WTC11 (cell line): ENCODE measurements at regions of chr19 and their contacts with region 1.

Region 1: DNA sequence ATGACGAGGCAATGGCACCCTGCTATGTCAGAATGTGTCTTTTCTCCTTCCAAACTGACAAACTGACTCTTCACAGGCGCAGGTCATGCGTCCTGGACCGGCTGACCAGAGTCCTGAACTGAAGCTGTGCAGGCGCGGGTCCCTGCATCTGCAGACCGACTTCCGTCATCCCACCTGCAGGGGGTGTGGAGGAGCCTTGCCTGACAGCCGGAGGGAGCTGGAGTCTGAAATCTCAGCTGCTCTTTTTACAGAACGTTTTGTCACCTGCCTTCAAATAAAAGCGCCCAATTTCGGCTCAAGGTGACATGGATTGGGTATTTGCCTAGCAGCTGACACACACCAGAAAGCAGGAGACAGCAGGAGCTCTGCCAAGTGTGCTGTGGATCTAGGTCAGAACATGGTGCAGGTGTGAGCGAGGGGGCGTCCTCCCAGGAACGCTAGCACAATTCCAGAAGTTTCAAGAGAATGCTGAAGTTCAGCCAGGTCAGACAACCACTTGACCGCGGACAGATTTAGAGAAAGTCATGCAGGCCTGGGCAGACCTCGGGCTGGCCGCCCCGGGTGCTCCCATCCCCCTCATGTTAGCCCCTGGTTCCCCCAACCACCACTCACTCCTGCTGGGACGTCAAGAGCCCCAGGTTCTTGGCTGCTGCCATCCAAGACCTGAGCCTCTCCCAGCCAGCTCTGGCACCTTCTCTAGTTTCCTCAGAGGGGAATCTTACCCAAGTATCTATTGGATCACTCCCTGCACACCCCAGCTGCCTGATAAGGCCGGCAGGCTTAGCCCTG is 32.8 kb downstream of the ELL start:
- DNase-seq: peak; percentile 73
- ATAC-seq: peak; percentile 73
- H3K4me3 Mint-ChIP-seq: no peak overlapping the region
- H3K27ac Mint-ChIP-seq: peak overlapping the region; percentile 65; the same call in 1 of the 2 replicates
- H3K4me1 Mint-ChIP-seq: peaks cover 32% of the 10 kb centered on the region
- H3K27me3 Mint-ChIP-seq: no peaks in the 10 kb centered on the region
- CTCF ChIP-seq: no peak

Region 2: GRCh38 chr19:18450931-18451845 is 37.8 kb before region 1 on chr19:
- CTCF ChIA-PET with region 1: interaction called, 10 read pairs
- POLR2A ChIA-PET with region 1: no interaction called
- DNase-seq: peak; percentile 95
- ATAC-seq: peak; percentile 83
- H3K4me3 Mint-ChIP-seq: no peak overlapping the region
- H3K27ac Mint-ChIP-seq: no peak overlapping the region; the same call in 1 of the 2 replicates
- H3K4me1 Mint-ChIP-seq: peaks cover 3% of the 10 kb centered on the region; the same call in 1 of the 2 replicates
- H3K27me3 Mint-ChIP-seq: no peaks in the 10 kb centered on the region
- CTCF ChIP-seq: peak; percentile 98

Region 3: GRCh38 chr19:18469069-18469846 is 19.8 kb before region 1 on chr19:
- CTCF ChIA-PET with region 1: interaction called, 24 read pairs
- POLR2A ChIA-PET with region 1: interaction called, 3 read pairs
- DNase-seq: peak; percentile 87
- ATAC-seq: peak; percentile 74
- H3K4me3 Mint-ChIP-seq: no peak overlapping the region
- H3K27ac Mint-ChIP-seq: no peak overlapping the region
- H3K4me1 Mint-ChIP-seq: peaks cover 9% of the 10 kb centered on the region
- H3K27me3 Mint-ChIP-seq: no peaks in the 10 kb centered on the region
- CTCF ChIP-seq: peak; percentile 88

Region 4: DNA sequence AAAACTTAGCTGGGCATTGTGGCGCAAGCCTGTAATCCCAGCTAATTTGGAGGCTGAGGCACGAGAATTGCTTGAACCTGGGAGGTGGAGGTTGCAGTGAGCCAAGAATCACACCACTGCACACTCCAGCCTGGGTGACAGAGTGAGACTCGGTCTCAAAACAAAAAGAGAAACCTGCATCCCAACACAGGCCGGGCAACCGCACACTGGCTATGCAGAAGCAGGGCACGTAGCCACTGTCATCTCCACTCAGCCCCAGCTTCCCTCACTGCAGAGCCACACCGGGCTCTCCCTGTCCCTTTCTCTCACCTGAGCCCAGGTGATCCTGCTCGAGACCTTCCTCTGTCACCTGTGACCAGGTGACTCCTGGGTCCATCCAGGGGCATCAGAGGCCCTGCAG is 21.2 kb after region 1 on chr19:
- CTCF ChIA-PET with region 1: interaction called, 12 read pairs
- POLR2A ChIA-PET with region 1: interaction called, 3 read pairs
- DNase-seq: no peak
- ATAC-seq: no peak
- H3K4me3 Mint-ChIP-seq: no peak overlapping the region
- H3K27ac Mint-ChIP-seq: peak overlapping the region; percentile 60; the same call in 1 of the 2 replicates
- H3K4me1 Mint-ChIP-seq: peaks cover 4% of the 10 kb centered on the region
- H3K27me3 Mint-ChIP-seq: no peaks in the 10 kb centered on the region
- CTCF ChIP-seq: no peak

Region 5: DNA sequence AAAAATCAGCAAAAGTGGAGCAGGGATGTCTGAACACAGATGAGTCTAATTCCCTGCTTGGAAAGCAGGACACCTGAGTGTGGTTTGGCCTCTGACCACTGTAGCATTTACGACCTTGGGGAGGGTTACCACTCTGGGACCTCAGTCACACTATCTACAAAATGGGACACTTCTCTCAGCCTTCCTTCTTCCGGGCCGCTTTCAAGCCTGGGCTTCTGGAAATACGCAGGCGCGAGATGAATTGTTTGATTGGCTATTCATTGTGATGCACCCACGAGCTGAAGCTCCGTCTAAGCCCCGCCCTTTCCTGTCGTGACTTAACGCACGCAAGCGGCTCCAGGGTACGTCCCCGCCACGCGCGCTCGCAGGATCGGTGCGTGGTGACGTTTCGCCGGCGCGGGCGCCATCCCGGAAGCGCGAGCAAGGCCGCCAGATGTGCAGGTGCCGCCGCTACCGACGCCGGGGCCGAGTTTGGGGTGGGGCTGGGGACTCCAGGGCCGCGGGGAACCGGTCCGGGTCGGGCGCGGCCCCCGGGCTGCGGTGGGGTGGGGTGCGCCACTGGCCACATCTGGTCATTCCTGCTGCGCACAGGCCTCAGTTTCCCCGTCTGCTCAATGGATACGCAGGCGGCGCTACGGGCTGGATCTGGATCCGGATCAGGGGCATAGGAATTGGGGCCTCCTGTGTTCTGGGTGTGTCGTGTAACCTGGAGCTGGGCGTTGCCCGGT is 68.6 kb after region 1 on chr19 and contains the start of gene KXD1:
- CTCF ChIA-PET with region 1: interaction called, 10 read pairs
- POLR2A ChIA-PET with region 1: interaction called, 3 read pairs
- DNase-seq: peak; percentile 79
- ATAC-seq: peak; percentile 91
- H3K4me3 Mint-ChIP-seq: peak within 1 kb of the TSS; percentile 87
- H3K27ac Mint-ChIP-seq: peak within 1 kb of the TSS; percentile 73
- H3K4me1 Mint-ChIP-seq: peaks cover 8% of the 10 kb centered on the region
- H3K27me3 Mint-ChIP-seq: no peaks in the 10 kb centered on the region
- CTCF ChIP-seq: no peak
- total RNA-seq, gene KXD1: 136 to 155 TPM (median 154 TPM) in 3 replicates

Region 6: DNA sequence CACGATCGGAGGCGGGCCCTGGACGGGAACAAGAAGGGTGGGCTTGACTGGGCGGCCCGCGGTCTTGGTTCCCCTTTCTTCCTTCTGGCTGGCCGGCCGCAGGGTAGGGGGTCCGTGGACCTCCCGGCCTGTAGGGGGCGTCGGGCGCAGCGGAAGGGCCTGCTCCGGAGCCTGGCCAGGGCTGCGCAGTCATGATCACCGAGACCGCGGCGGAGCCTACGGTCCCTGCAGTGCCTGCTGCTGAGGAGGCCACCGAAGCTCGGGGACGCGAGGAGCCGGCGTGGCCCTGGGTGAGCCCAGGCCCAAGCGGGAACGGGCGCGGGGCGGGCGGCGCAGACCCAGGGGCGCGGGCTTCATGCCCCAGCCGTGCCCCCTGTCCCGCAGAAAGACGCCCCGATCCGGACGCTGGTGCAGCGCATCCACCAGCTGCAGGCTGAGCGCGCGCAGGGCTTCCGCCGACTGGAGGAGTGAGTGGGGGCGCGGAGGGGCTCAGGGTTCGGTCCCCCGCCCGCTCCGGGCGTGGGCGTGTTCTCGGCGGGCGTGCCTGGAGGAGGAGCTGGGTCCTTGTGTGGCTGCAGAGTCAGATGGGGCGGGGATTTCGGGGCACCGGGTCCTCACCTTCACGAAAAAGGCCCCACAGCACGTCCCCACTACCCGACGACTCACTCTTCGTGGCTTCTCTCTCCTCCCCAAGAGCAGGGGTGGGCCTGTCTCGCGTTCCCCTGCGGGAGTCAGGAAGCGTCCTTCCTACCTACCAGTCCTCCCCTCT is 99.8 kb after region 1 on chr19 and contains the start of gene REX1BD:
- CTCF ChIA-PET with region 1: interaction called, 18 read pairs
- POLR2A ChIA-PET with region 1: interaction called, 3 read pairs
- DNase-seq: peak; percentile 87
- ATAC-seq: peak; percentile 51
- H3K4me3 Mint-ChIP-seq: peak within 1 kb of the TSS; percentile 86
- H3K27ac Mint-ChIP-seq: peak within 1 kb of the TSS; percentile 98
- H3K4me1 Mint-ChIP-seq: peaks cover 32% of the 10 kb centered on the region
- H3K27me3 Mint-ChIP-seq: peaks cover 10% of the 10 kb centered on the region
- CTCF ChIP-seq: peak; percentile 85
- total RNA-seq, gene REX1BD: 90.2 to 107 TPM (median 99.0 TPM) in 3 replicates

Region 7: DNA sequence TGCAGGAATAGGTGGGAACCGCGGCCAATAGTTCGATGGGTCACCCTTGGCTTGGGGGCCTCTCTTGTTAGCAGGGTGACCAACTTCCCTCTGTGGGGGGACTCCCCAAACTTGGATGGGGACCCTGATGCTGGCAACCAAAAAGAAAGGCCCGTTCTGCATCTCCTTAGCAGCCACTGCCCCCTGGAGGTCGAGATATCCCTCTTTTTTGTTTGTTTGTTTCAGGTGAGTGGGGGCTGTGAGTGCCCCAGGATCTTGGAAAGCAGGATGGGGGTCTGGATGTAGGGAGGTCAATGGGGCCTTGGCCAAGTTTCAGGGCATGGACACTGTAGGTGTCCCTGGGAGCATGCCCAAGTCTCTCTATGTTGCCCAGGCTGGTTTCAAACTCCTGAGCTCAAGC is 186.7 kb after region 1 on chr19:
- CTCF ChIA-PET with region 1: interaction called, 10 read pairs
- POLR2A ChIA-PET with region 1: no interaction called
- DNase-seq: peak; percentile 65
- ATAC-seq: peak; percentile 26
- H3K4me3 Mint-ChIP-seq: no peak overlapping the region
- H3K27ac Mint-ChIP-seq: no peak overlapping the region
- H3K4me1 Mint-ChIP-seq: peaks cover 18% of the 10 kb centered on the region
- H3K27me3 Mint-ChIP-seq: no peaks in the 10 kb centered on the region
- CTCF ChIP-seq: peak; percentile 45; the same call in 1 of the 2 replicates